BJ (cell line): ENCODE measurements at regions of chr18 and their contacts with region 1.

Region 1: GRCh38 chr18:31469629-31470028 is 22.1 kb downstream of the DSG3 start:
- DNase-seq: no peak
- H3K4me3 ChIP-seq: no peak overlapping the region
- H3K27me3 ChIP-seq: no peaks in the 10 kb centered on the region
- CTCF ChIP-seq: no peak

Region 2: DNA sequence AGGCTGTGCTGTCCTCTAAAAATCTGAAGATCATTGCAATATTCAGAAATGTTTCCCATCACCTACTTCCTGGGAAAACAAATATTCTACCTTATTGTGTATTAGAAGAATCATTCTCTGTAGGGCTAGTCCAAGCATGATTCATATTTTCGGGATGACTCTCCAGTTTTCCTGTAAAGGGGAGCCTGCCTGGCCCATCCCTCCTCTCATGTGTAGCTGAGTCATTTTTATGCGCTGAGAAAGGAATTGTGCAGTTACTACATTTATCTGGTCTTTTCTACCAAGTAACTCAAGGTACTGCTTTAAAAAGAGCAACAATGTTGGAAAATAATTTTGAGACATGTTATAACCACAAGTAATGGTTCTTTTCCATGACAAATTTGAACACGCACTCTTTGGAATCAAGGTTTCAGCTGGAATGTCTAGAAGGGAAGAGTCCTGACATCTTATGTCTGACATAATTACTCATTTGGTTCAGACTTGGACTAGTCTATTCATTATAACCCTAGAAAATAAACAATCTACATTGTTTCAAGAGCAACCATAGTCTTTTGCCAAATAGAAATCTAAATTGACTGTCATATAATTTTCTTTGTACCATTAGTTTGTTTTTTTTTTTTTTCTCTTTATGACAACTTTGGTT is 15.4 kb before region 1 on chr18:
- CTCF ChIA-PET with region 1: no interaction called
- POLR2A ChIA-PET with region 1: interaction called, 12 read pairs
- DNase-seq: no peak
- H3K4me3 ChIP-seq: no peak overlapping the region
- H3K27me3 ChIP-seq: no peaks in the 10 kb centered on the region
- CTCF ChIP-seq: no peak

Region 3: DNA sequence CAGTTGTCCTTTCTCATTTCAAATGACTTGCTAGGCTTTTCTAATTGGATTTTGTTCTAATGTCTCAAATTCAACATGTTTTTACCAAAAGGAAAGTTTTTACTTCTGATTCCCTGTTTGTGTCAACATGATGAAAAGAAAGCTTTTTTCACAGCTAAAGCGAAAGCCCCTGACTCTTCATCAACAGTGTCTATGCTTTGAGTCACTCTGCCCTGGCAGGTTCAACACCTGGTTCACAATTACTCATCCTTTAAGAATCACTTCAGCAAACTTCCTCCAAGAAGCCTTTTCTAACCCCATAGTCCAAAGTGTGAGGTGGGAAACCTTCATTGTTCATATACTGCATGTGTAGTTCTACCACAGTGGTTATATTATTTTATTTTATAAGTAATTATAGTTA is 20.8 kb after region 1 on chr18:
- CTCF ChIA-PET with region 1: no interaction called
- POLR2A ChIA-PET with region 1: no interaction called
- DNase-seq: no peak
- H3K4me3 ChIP-seq: no peak overlapping the region
- H3K27me3 ChIP-seq: no peaks in the 10 kb centered on the region
- CTCF ChIP-seq: no peak